ENCODE measurements at regions of chr9 and their contacts with region 1.

Region 1: GRCh38 chr9:4277531-4277991 is 22.3 kb downstream of the GLIS3 start:
- DNase-seq: peak; percentile 15
- H3K4me3 Mint-ChIP-seq: peak overlapping the region; percentile 33
- H3K27ac Mint-ChIP-seq: peak overlapping the region; percentile 87
- H3K4me1 Mint-ChIP-seq: peaks cover 34% of the 10 kb centered on the region
- H3K27me3 Mint-ChIP-seq: no peaks in the 10 kb centered on the region
- CTCF ChIP-seq: no peak

Region 2: GRCh38 chr9:4048441-4048840 is 229.1 kb before region 1 on chr9:
- CTCF ChIA-PET with region 1: no interaction called
- intact Hi-C with region 1: no loop called
- DNase-seq: peak; percentile 6
- H3K4me3 Mint-ChIP-seq: no peak overlapping the region
- H3K27ac Mint-ChIP-seq: no peak overlapping the region
- H3K4me1 Mint-ChIP-seq: peaks cover 16% of the 10 kb centered on the region
- H3K27me3 Mint-ChIP-seq: no peaks in the 10 kb centered on the region
- CTCF ChIP-seq: peak; percentile 15

Region 3: GRCh38 chr9:4235871-4236804 is 41.4 kb before region 1 on chr9:
- CTCF ChIA-PET with region 1: interaction called, 4 read pairs
- intact Hi-C with region 1: loop called (anchors 5 kb)
- DNase-seq: peak; percentile 39
- H3K4me3 Mint-ChIP-seq: peak overlapping the region; percentile 64
- H3K27ac Mint-ChIP-seq: peak overlapping the region; percentile 89
- H3K4me1 Mint-ChIP-seq: peaks cover 27% of the 10 kb centered on the region
- H3K27me3 Mint-ChIP-seq: no peaks in the 10 kb centered on the region
- CTCF ChIP-seq: no peak

Measured in Calu3 (cell line).